ENCODE measurements at regions of chr12 and their contacts with region 1.

Region 1: DNA sequence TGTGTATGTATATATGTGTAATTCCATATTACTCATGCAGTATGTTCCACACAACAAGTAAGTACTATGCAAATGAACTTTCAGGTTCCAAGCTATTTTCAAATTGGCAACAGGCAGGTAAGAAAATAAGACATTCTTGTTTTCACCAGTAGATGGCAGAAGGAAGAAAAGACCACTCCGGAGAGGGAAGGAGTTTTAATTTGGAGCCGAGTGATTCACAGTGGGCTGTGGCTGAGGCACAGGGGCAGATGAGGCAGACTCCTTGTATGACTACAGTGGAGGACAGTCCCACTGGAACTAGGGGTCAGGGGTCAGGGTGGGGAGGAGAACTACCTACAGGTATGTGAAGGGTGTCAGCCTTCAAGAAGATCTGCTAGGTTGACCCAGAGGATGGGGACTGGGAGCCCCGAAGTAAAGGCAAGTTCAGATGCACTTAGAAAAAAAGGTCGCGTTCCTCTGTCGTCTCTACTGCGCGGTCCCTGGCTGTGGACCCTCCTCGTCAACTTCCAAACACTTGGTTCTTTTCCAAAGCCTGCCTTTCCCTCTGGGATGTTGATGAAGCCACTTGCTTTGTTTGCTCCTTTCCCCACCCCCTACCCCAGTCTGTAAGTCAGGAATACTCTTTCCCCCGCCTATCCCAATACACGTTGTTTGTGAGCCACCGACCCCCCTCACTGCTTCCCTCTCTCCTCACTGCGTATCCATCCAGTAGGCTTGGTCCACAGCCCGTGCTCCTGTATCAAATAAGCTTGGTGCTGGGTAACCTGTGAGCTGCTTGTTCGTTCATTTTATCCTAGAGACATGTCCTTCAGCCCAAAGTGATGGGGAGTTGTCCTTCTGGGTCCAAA is 24.1 kb downstream of the DDX47 start:
- DNase-seq: peak; percentile 71 to 79
- ATAC-seq: peak; percentile 68
- H3K4me3 ChIP-seq: no peak overlapping the region
- H3K27ac ChIP-seq: no peak overlapping the region
- H3K4me1 ChIP-seq: no peaks in the 10 kb centered on the region
- H3K27me3 ChIP-seq: no peaks in the 10 kb centered on the region

Region 2: GRCh38 chr12:12885096-12885792 is 48.0 kb after region 1 on chr12:
- intact Hi-C with region 1: loop called (anchors 2 to 5 kb)
- DNase-seq: no peak
- ATAC-seq: no peak
- H3K4me3 ChIP-seq: no peak overlapping the region
- H3K27ac ChIP-seq: no peak overlapping the region
- H3K4me1 ChIP-seq: peaks cover 0 to 3% of the 10 kb centered on the region in 2 donors
- H3K27me3 ChIP-seq: no peaks in the 10 kb centered on the region

Region 3: DNA sequence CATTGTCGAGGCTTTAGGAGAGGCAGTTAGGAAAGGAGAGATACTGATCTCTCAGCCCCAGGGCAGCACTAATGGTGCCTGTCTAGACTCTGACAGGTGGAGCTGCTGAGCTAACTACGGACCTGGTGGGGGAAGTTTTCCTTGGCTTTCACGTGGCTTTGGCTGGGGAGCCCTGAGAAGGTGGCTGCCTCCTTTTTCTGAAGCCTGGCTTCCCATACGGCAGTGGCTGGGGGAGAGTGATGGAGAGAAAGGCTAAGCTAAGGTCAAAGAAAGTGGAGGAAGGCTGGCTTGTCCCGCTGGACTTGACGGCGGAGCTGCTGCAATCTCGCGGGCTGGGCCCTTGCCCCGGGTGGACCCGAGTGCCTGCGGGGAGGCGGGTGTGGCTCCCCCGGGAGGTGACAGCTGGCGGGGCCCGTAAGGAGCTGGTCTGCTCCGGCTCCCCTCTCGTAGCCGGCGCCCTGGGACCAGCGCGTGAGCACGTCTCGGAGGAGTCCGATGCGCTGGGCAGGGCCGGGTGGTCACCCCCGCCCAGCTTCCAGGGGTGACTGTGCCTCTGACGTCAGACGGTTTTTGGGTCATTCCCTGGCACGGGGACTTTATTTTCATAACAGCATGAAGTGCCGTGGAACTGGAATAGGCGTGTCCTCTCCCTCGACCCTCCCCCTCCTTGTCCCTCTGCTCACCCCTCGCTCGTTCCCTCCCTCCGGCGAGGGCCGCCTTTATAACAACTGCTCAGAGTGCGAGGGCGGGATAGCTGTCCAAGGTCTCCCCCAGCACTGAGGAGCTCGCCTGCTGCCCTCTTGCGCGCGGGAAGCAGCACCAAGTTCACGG is 53.8 kb after region 1 on chr12 and contains the start of gene GPRC5A:
- intact Hi-C with region 1: loop called (anchors 2 to 5 kb)
- DNase-seq: peak; percentile 94 to 96
- ATAC-seq: peak; percentile 95
- H3K4me3 ChIP-seq: peak within 1 kb of the TSS; percentile 72 to 93
- H3K27ac ChIP-seq: peak within 1 kb of the TSS; percentile 69 to 97
- H3K4me1 ChIP-seq: no peaks in the 10 kb centered on the region
- H3K27me3 ChIP-seq: no peaks in the 10 kb centered on the region
- total RNA-seq, gene GPRC5A: 36.6 to 86.0 TPM

Region 4: DNA sequence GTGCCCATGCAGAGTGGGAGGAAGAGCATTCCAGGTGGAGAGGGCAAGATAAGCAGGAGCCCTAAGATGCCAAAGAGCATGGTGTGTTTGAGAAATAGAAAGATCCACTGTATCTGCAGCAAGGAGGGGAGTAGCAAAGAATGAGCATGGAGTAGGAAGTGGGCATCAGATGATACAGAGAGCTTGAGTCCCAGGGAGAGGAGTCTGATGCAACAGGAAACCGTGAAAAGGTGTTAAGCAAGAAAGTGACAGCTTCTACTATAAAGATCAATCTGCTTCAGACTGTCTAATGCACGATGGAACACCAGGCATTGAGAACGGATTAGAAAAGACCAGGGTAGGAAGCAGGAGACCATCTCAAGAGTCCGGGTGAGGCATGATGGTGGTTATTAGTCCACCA is 127.0 kb after region 1 on chr12:
- intact Hi-C with region 1: no loop called
- DNase-seq: no peak
- ATAC-seq: no peak
- H3K4me3 ChIP-seq: no peak overlapping the region
- H3K27ac ChIP-seq: no peak overlapping the region
- H3K4me1 ChIP-seq: no peaks in the 10 kb centered on the region
- H3K27me3 ChIP-seq: no peaks in the 10 kb centered on the region

Region 5: DNA sequence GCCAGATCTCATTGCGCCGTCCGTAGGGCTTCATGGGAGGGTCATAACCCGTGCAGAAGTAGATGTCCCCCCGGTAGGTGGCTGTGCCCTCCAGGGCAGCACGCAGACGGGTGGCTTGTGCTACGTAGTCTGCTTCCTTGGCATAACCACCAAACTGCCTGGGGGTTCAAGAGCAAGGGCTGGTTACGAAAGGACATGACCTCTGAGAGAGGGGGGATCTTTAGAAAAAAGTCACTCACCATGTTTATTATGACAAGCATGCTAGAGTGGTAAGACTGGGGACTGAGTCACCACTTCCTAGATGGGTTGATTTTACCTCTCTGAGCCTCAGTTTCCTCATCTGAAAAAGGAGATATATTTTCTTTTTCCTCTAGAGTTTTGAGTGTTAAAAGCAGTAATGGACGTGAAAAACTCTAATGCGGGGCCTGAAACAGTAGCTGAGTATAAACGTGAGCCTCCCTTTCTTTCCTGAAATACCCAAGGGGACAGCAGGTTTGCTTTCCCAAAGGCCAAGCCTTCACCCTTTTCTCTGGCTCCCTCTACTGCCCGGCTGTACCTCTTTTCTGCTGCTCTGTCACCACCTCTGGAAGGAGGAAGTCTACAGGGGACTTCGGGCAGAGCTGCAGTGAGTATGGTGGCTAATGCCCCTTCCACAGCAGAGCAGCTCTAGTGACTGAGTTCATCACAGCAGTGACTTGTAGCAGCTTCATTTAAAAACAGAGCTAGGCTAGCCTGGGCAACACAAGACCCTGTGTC is 138.3 kb after region 1 on chr12:
- intact Hi-C with region 1: loop called in 1 of 2 experiments (anchors 5 kb)
- DNase-seq: no peak
- ATAC-seq: peak; percentile 72
- H3K4me3 ChIP-seq: no peak overlapping the region
- H3K27ac ChIP-seq: peak overlapping the region; percentile 90 to 96
- H3K4me1 ChIP-seq: peaks cover 0 to 5% of the 10 kb centered on the region in 2 donors
- H3K27me3 ChIP-seq: no peaks in the 10 kb centered on the region

Region 6: GRCh38 chr12:12983420-12984035 is 146.3 kb after region 1 on chr12:
- intact Hi-C with region 1: loop called (anchors 2 to 5 kb)
- DNase-seq: no peak
- ATAC-seq: peak; percentile 79
- H3K4me3 ChIP-seq: no peak overlapping the region
- H3K27ac ChIP-seq: no peak overlapping the region
- H3K4me1 ChIP-seq: peaks cover 0 to 5% of the 10 kb centered on the region in 2 donors
- H3K27me3 ChIP-seq: no peaks in the 10 kb centered on the region

Region 7: GRCh38 chr12:12999959-13000615 is 162.8 kb after region 1 on chr12 and contains the start of gene HEBP1:
- intact Hi-C with region 1: no loop called
- DNase-seq: peak; percentile 97 to 99
- ATAC-seq: peak; percentile 98
- H3K4me3 ChIP-seq: peak within 1 kb of the TSS; percentile 84 to 89
- H3K27ac ChIP-seq: peak within 1 kb of the TSS; percentile 83 to 95
- H3K4me1 ChIP-seq: peaks cover 0 to 1% of the 10 kb centered on the region in 2 donors
- H3K27me3 ChIP-seq: no peaks in the 10 kb centered on the region
- total RNA-seq, gene HEBP1: 55.8 to 73.6 TPM

Measured in aorta (tissue), 5 donors.